ENCODE measurements at regions of chr16 and their contacts with region 1.

Region 1: DNA sequence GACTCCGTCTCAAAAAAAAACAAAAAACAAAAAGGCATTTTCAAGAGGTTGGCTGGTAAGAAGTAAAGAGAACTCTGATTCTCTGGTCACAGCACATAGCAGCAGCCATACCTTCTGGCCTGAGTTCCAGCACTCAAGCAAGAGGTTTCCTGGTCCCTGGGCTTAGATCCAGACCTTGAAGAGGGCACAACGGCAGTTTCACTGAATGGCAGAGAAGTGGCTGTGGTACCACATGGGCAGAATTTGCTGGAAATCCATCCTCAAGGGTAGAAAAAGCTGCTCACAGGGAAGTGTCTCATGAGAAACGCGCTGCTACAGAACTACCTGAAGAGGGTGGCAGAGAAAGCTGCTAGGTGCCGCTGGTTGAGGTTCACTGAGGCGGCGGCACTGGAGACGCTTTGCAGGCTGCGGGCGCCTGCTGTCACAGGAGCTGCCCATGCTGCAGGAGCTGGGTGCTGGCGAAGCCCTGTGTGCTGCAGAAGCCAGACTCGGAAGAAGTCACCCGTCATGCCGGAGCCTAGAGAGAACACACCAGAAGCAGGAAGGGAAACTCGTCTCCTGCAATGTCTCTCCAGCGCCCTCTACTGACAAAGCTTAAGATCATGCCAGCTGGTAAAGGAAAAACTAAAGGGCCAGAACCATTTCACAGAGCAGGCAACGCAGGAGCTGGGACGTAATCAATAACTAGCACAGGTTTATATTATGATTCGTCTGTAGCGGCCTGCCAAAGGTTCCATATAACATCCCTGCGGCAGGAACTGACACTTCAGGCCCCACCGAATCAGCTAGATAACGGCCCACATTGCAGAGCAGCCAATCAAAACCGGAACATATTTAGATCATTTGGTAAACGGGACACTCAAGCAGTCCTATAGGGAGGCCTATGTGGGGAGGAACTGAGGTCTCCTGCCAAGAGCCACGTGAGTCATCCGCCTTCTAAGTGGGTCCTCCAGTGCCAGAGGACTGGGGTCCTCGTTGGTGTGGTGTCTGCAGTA is 5.4 kb upstream of the ZNF213 start:
- DNase-seq: no peak
- ATAC-seq: peak; percentile 83
- H3K4me3 ChIP-seq: peak overlapping the region; percentile 70
- H3K27ac ChIP-seq: peak overlapping the region; percentile 69
- H3K4me1 ChIP-seq: peaks cover 10% of the 10 kb centered on the region
- H3K27me3 ChIP-seq: no peaks in the 10 kb centered on the region
- CTCF ChIP-seq: peak; percentile 91 to 95 (median 94)
- EP300 ChIP-seq: no peak
- POLR2A ChIP-seq: peak; percentile 72
- RAD21 ChIP-seq: peak; percentile 83

Region 2: DNA sequence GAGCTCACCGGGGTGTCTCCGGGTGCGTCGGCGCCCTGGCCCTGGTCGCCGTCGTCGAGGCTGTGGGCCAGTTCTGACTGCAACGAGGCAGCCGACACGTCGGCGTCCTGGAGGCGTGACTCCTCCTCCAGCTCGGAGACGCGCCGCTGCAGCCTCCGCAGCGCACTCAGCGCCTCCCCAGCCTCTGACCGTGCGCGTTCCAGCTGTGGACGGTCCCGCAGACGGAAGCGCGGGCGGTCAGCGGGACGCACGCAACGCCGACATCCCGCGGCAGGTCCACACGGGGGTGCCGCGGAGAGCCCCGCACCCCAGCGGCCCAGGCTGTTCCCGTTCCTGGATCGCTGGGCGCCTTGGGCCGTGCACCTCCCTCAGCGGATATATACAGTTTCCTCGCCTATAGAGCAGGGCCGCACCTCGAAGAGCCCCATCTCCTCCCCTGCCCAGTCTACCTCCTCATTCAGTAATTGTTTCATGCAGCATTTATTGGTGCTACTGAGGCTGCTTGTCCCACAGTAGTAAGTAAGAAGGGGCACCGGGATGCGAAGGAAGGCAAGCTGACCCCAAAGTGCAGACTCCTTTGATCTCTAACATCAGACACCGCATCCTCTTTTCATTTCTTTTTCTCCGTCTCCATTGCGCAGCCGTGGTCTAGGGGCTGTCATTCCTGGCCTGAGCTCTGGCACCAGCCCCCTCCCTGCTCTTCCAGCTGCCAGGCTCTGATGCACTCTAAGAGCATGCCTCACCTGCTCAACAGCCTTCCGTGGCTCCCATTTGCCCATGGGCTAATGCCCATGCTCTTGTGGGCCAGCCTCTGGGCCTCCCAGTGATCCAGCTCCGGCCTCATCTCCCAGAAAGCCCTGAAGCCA is 99.7 kb before region 1 on chr16:
- CTCF ChIA-PET with region 1: interaction called, 143 read pairs
- POLR2A ChIA-PET with region 1: interaction called, 3 read pairs
- RAD21 ChIA-PET with region 1: interaction called, 32 read pairs
- SMC1A ChIA-PET with region 1: interaction called, 36 read pairs
- in situ Hi-C with region 1: no loop called
- intact Hi-C with region 1: loop called (anchors 1 kb)
- DNase-seq: no peak
- ATAC-seq: no peak
- H3K4me3 ChIP-seq: no peak overlapping the region
- H3K27ac ChIP-seq: no peak overlapping the region
- H3K4me1 ChIP-seq: peaks cover 6% of the 10 kb centered on the region
- H3K27me3 ChIP-seq: peaks cover 7 to 8% of the 10 kb centered on the region in 2 experiments
- CTCF ChIP-seq: no peak
- EP300 ChIP-seq: no peak
- POLR2A ChIP-seq: peak; percentile 22; the same call in 1 of the 2 replicates
- RAD21 ChIP-seq: no peak

Region 3: DNA sequence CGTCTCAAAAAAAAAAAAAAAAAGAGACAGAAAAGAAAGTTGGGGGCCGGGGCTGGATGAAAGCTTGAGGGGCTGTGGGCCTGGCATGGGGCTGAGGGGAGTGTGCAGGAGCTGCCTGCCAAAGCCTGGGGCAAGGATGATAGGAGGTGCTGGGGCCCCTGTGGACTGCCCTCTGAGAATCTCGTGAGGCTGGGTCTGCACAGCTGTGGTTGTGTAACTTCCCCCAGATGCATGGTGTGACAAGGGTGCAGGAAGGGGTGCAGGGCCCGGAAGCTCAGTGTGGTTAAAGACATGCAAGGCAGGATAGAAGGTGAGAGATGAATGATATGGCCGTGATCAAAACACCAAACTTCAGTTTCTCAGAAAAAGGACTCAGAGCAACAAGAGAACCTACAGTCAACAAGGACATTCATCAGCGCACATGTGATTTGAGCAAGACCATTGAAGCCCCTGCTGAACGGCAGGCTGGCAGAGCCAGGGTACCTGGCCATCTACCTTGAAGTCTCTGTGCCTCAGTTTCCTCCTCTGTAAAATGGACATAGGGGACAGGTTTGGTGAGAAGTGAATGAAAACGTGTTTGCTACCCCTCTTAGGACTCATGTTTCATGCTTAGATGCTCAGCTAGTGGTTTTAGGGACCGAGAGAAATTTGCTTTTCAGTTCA is 54.4 kb before region 1 on chr16:
- CTCF ChIA-PET with region 1: interaction called, 42 read pairs
- POLR2A ChIA-PET with region 1: interaction called, 10 read pairs
- RAD21 ChIA-PET with region 1: interaction called, 7 read pairs
- SMC1A ChIA-PET with region 1: interaction called, 9 read pairs
- in situ Hi-C with region 1: no loop called
- intact Hi-C with region 1: no loop called
- DNase-seq: peak; percentile 69
- ATAC-seq: peak; percentile 88
- H3K4me3 ChIP-seq: peak overlapping the region; percentile 55
- H3K27ac ChIP-seq: peak overlapping the region; percentile 77
- H3K4me1 ChIP-seq: peaks cover 45% of the 10 kb centered on the region
- H3K27me3 ChIP-seq: no peaks in the 10 kb centered on the region
- CTCF ChIP-seq: no peak
- EP300 ChIP-seq: no peak
- POLR2A ChIP-seq: peak; percentile 64
- RAD21 ChIP-seq: no peak

Region 4: DNA sequence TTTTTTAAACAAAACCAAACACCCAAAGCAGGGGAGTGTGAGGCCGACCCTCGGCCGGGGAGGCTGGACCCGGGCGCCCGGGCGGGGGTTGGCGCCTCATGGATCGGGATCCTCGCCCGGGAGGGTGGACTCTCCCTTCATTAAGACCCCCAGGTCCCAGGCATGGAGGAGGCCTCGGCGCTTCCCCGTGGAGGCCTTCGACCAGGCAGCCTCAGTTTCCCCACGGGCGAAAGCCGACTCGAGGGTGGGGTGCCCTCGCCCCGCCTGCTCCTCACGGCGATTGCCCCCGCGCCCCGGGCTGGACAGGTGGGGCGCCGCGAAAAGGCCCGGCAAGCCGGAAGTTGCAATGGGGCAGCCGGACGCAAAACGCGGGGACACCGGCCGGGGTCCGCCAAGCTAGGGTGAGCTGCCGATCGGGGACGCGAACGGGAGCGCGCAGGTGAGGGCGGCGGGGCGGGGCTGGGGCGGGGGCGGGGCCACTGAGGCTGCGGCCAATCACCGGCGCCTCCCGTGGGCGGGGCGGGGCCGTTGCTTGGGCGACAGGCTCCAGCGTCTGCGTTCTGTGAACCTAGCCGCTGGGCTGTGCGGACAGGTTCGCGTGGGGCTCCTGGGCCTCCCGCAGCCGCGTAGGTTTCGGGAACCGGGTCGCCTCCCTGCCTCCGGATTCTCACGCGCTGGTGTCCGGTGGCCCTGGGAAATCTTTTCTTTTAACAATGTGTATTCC is 23.1 kb before region 1 on chr16:
- CTCF ChIA-PET with region 1: interaction called, 396 read pairs
- POLR2A ChIA-PET with region 1: interaction called, 10 read pairs
- RAD21 ChIA-PET with region 1: interaction called, 38 read pairs
- SMC1A ChIA-PET with region 1: interaction called, 67 read pairs
- in situ Hi-C with region 1: no loop called
- intact Hi-C with region 1: no loop called
- DNase-seq: no peak
- ATAC-seq: peak; percentile 95
- H3K4me3 ChIP-seq: peak overlapping the region; percentile 78
- H3K27ac ChIP-seq: peak overlapping the region; percentile 74
- H3K4me1 ChIP-seq: peaks cover 10% of the 10 kb centered on the region
- H3K27me3 ChIP-seq: no peaks in the 10 kb centered on the region
- CTCF ChIP-seq: no peak
- EP300 ChIP-seq: no peak
- POLR2A ChIP-seq: peak; percentile 90
- RAD21 ChIP-seq: no peak

Region 5: DNA sequence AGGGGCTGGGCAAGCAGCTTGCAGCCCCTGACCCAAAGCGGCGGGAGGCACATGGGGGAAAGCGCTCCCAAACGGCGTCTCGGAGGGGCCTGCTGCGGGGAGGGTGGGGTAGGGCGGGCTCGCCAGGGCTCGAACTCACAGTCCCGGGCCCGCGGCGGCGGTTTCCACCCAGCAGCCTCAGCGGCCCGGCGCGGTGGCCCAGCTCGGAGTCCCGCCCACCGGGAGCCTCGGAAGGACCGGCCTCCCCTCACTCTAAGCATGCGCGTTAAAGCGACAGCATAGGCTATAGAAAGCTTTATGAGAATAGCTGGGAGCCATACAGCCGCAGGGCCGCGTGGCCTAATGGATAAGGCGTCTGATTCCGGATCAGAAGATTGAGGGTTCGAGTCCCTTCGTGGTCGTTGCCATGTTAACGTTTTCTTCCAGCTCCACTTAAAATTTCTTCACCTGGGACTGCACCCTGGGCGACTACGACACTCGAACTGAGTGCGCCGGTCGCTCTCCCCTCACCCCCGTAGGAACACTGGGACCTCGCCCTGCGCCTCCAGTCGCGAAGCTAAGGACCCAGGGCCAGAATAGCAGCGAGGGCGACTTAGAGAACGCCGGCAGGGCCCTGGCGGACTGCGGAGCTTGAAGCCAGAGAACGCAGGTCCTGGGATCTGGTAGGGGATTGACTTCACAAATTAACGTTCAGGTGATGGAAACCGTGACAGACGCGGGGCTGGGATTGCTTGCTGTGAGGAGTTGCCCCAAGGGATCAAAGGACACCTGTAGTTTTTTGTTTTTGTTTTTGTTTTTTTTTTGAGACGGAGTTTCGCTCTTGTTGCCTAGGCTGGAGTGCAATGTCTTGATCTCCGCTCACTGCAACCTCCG is 21.1 kb after region 1 on chr16:
- CTCF ChIA-PET with region 1: interaction called, 24 read pairs
- POLR2A ChIA-PET with region 1: interaction called, 13 read pairs
- RAD21 ChIA-PET with region 1: interaction called, 9 read pairs
- SMC1A ChIA-PET with region 1: interaction called, 12 read pairs
- in situ Hi-C with region 1: no loop called
- intact Hi-C with region 1: no loop called
- DNase-seq: peak; percentile 95
- ATAC-seq: peak; percentile 91
- H3K4me3 ChIP-seq: peak overlapping the region; percentile 94
- H3K27ac ChIP-seq: peak overlapping the region; percentile 70
- H3K4me1 ChIP-seq: peaks cover 3% of the 10 kb centered on the region; the same call in 1 of the 2 replicates
- H3K27me3 ChIP-seq: no peaks in the 10 kb centered on the region
- CTCF ChIP-seq: no peak
- EP300 ChIP-seq: peak in 1 of 2 experiments; percentile 65; a peak in 1 of 4 replicates
- POLR2A ChIP-seq: no peak
- RAD21 ChIP-seq: no peak

Region 6: GRCh38 chr16:3173892-3174617 is 44.6 kb after region 1 on chr16:
- CTCF ChIA-PET with region 1: interaction called, 56 read pairs
- POLR2A ChIA-PET with region 1: interaction called, 10 read pairs
- RAD21 ChIA-PET with region 1: interaction called, 5 read pairs
- SMC1A ChIA-PET with region 1: interaction called, 10 read pairs
- in situ Hi-C with region 1: no loop called
- intact Hi-C with region 1: no loop called
- DNase-seq: no peak
- ATAC-seq: peak; percentile 16
- H3K4me3 ChIP-seq: peak overlapping the region; percentile 22
- H3K27ac ChIP-seq: peak overlapping the region; percentile 25; the same call in 1 of the 2 replicates
- H3K4me1 ChIP-seq: peaks cover 35% of the 10 kb centered on the region
- H3K27me3 ChIP-seq: no peaks in the 10 kb centered on the region; a peak in 1 of 4 replicates
- CTCF ChIP-seq: peak; percentile 30 to 55 (median 54); a peak in 5 of 6 replicates
- EP300 ChIP-seq: no peak
- POLR2A ChIP-seq: no peak; the same call in 1 of the 2 replicates
- RAD21 ChIP-seq: no peak